ENCODE measurements at regions of chr3 and their contacts with region 1.

Region 1: GRCh38 chr3:11626084-11626463 is 17.6 kb downstream of the VGLL4 start:
- DNase-seq: peak; percentile 22
- H3K4me3 Mint-ChIP-seq: peak overlapping the region; percentile 37
- H3K27ac Mint-ChIP-seq: peak overlapping the region; percentile 87
- H3K4me1 Mint-ChIP-seq: peaks cover 73% of the 10 kb centered on the region
- H3K27me3 Mint-ChIP-seq: no peaks in the 10 kb centered on the region

Region 2: GRCh38 chr3:11367143-11367693 is 258.9 kb before region 1 on chr3:
- intact Hi-C with region 1: loop called (anchors 1 kb)
- DNase-seq: no peak
- H3K4me3 Mint-ChIP-seq: no peak overlapping the region
- H3K27ac Mint-ChIP-seq: no peak overlapping the region
- H3K4me1 Mint-ChIP-seq: peaks cover 31% of the 10 kb centered on the region
- H3K27me3 Mint-ChIP-seq: no peaks in the 10 kb centered on the region

Region 3: DNA sequence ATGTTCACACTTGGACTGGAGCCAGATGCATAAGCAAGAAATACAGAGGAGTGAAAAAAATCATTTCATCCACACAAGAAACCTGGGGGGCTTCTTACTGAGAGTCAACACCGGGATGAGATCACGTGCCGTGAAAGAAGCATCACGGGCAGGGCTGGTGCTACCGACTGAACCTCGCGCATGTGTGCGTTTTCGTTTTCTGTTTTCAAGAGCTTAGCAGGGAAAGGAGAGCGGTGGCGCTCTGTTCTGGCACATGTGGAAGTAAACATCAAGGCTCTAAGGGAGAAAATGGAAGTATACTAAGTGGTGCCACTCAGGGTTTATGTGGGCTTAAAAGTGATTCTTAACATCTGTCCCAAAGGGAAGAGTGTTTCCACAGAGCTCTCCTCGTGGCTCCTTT is 38.3 kb before region 1 on chr3:
- intact Hi-C with region 1: loop called (anchors 5 kb)
- DNase-seq: no peak
- H3K4me3 Mint-ChIP-seq: no peak overlapping the region
- H3K27ac Mint-ChIP-seq: peak overlapping the region; percentile 74
- H3K4me1 Mint-ChIP-seq: peaks cover 44% of the 10 kb centered on the region
- H3K27me3 Mint-ChIP-seq: no peaks in the 10 kb centered on the region

Region 4: DNA sequence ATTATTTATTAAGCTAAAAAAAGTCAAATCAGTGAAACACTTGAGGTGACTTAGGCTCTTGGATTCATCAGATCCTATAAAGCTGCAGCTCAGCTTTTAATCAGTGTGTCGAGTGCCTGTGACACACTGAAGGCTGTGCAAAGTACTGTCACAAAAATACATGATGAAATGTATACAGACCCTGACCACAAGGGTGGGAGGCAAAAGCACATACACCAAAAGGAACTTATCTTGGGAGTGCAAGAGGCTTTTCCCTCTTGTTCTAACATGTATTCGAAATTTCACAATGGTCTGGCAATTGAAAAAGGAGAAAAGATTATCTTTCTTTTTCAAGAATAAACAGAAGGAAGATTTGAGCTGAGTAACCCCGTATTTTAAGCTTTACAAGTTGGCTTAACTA is 18.3 kb before region 1 on chr3:
- intact Hi-C with region 1: loop called (anchors 2 kb)
- DNase-seq: no peak
- H3K4me3 Mint-ChIP-seq: no peak overlapping the region
- H3K27ac Mint-ChIP-seq: no peak overlapping the region
- H3K4me1 Mint-ChIP-seq: peaks cover 54% of the 10 kb centered on the region
- H3K27me3 Mint-ChIP-seq: no peaks in the 10 kb centered on the region

Region 5: GRCh38 chr3:11764931-11765363 is 138.9 kb after region 1 on chr3:
- intact Hi-C with region 1: loop called (anchors 5 kb)
- DNase-seq: peak; percentile 27
- H3K4me3 Mint-ChIP-seq: peak overlapping the region; percentile 13
- H3K27ac Mint-ChIP-seq: peak overlapping the region; percentile 74
- H3K4me1 Mint-ChIP-seq: peaks cover 20% of the 10 kb centered on the region
- H3K27me3 Mint-ChIP-seq: no peaks in the 10 kb centered on the region

Measured in activated T-helper 2 cell treated with anti-CD3 and anti-CD28 coated beads, Interferon-gamma antibody, Interleukin-2, Interleukin-4, amounts not matched to agents 10 μg/mL and 5 μg/mL and 100 μg/mL, durations not matched to agents 14 hours and 24 hours and 36 hours (primary cell).